Thyroid gland (tissue), 4 donors: ENCODE measurements at regions of chr7 and their contacts with region 1.

Region 1: DNA sequence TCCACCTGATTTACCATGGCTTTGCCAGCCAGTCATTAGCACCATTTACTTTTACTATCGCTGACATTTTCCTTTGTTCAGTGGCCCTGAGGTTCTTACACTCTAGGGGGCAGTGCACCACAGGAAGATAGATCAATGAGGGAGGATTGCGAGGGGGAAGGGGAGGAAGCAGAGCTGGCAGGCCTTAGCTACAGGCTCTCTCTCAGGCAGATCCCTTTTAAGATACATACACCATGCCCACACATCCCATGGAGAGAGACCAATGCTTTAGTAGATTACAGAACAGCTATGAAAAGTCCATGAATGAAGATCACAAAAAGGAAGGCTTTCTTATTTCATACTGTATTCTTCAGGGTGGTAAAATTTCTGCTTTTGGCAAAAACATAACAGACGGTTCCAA is 47.4 kb downstream of the DENND11 start:
- DNase-seq: peak; percentile 77 to 78
- H3K4me3 ChIP-seq: no peak overlapping the region
- H3K27ac ChIP-seq: no peak overlapping the region
- H3K4me1 ChIP-seq: peaks cover 8 to 9% of the 10 kb centered on the region in 2 donors
- H3K27me3 ChIP-seq: no peaks in the 10 kb centered on the region
- CTCF ChIP-seq: peak; percentile 33 to 96 (median 76)
- POLR2A ChIP-seq: no peak

Region 2: DNA sequence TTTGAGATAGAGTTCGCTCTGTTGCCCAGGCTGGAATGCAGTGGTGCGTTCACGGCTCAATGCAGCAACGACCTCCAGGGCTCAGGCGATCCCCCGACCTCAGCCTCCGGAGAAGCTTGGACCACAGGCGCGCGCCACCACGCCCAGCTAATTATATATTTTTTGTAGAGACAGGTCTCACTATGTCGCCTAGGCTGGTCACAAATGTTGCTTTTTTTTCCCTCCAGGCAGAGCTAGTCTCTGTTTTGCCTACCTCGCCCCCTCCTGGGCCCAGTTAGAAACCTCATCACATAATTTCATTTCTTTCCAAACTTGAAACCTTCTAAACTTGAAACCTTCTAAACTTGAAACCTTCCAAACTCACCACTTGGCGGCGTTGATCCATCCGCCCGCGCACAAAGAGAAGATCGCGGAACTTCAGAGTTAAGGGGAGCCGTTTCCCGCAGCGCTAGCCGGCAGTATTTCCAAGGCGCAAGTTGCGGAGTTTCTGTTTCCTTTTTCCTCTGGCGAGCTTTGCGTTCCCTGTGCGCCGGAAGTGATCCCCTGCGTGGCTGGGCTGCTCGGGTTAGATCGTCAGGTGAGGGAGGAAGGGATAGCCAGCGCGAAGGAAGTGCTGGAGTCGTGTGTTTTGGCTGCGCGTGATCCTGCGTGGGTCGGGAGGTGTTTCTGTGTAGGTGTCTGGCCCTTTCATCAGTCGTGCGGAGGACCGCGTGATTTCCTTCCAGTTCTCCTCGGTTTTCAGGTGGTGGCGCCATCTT is 83.5 kb after region 1 on chr7 and contains the start of gene SSBP1:
- intact Hi-C with region 1: loop called (anchors 10 kb)
- DNase-seq: peak; percentile 89 to 92
- H3K4me3 ChIP-seq: peak within 1 kb of the TSS; percentile 37 to 86 (median 84)
- H3K27ac ChIP-seq: peak within 1 kb of the TSS; percentile 80 to 84 (median 83)
- H3K4me1 ChIP-seq: peaks cover 15 to 18% of the 10 kb centered on the region in 2 donors
- H3K27me3 ChIP-seq: no peaks in the 10 kb centered on the region
- CTCF ChIP-seq: peak; percentile 17 to 92 (median 73)
- POLR2A ChIP-seq: peak in 1 of 2 donors; percentile 68
- total RNA-seq, gene SSBP1: 112 to 146 (median 129) TPM

Region 3: GRCh38 chr7:141763797-141764196 is 109.2 kb after region 1 on chr7 and contains the start of gene TAS2R3:
- intact Hi-C with region 1: no loop called
- DNase-seq: no peak
- H3K4me3 ChIP-seq: no peak within 1 kb of the TSS
- H3K27ac ChIP-seq: no peak within 1 kb of the TSS
- H3K4me1 ChIP-seq: no peaks in the 10 kb centered on the region
- H3K27me3 ChIP-seq: no peaks in the 10 kb centered on the region
- CTCF ChIP-seq: no peak
- POLR2A ChIP-seq: no peak
- total RNA-seq, gene TAS2R3: 3.0 to 11.1 (median 4.1) TPM